Panc1 (cell line): ENCODE measurements at regions of chrX and their contacts with region 1.

Region 1: DNA sequence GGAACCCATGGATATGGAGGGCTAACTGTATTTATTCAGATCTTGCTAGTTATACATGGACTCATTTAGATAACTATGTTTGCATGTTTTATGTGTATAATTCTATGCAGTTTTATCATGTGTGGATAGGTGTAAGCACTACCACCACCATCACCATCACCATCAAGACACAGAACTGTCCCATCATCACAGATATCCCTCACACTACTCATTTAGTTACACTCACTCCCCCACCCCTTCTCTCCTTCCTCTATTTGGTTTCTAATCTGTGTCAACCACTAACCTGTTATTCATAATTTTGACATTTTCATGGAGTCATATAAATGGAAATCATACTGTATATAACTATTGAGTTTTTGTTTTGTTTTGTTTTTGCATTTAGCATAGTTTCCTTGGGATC is 43.7 kb downstream of the STAG2 start:
- DNase-seq: no peak
- ATAC-seq: no peak
- H3K4me3 ChIP-seq: no peak overlapping the region
- H3K27ac ChIP-seq: no peak overlapping the region
- H3K4me1 ChIP-seq: peaks cover 6% of the 10 kb centered on the region; the same call in 1 of the 2 replicates
- H3K27me3 ChIP-seq: no peaks in the 10 kb centered on the region
- CTCF ChIP-seq: no peak

Region 2: GRCh38 chrX:123976706-123977316 is 28.4 kb before region 1 on chrX:
- CTCF ChIA-PET with region 1: no interaction called
- POLR2A ChIA-PET with region 1: interaction called, 13 read pairs
- in situ Hi-C with region 1: no loop called
- intact Hi-C with region 1: no loop called
- DNase-seq: no peak
- ATAC-seq: peak; percentile 74; the same call in 1 of the 2 replicates
- H3K4me3 ChIP-seq: no peak overlapping the region
- H3K27ac ChIP-seq: no peak overlapping the region
- H3K4me1 ChIP-seq: peaks cover 35% of the 10 kb centered on the region
- H3K27me3 ChIP-seq: no peaks in the 10 kb centered on the region
- CTCF ChIP-seq: no peak; the same call in 1 of the 2 replicates